Activated B cell treated with CpG ODN at 0.5 μM for 24 hours (primary cell): ENCODE measurements at regions of chr3 and their contacts with region 1.

Region 1: GRCh38 chr3:46208167-46208704 is at the start of gene CCR1:
- DNase-seq: no peak
- ATAC-seq: peak; percentile 80
- H3K4me3 Mint-ChIP-seq: peak within 1 kb of the TSS; percentile 73
- H3K27ac Mint-ChIP-seq: peak within 1 kb of the TSS; percentile 72
- H3K4me1 Mint-ChIP-seq: peaks cover 52% of the 10 kb centered on the region
- H3K27me3 Mint-ChIP-seq: no peaks in the 10 kb centered on the region
- CTCF ChIP-seq: no peak
- total RNA-seq, gene CCR1: 0.73 and 0.82 TPM in 2 replicates

Region 2: GRCh38 chr3:45938864-45939263 is 269.4 kb before region 1 on chr3:
- CTCF ChIA-PET with region 1: interaction called, 12 read pairs
- POLR2A ChIA-PET with region 1: no interaction called
- intact Hi-C with region 1: loop called (anchors 1 kb)
- DNase-seq: peak; percentile 55
- ATAC-seq: peak; percentile 86
- H3K4me3 Mint-ChIP-seq: no peak overlapping the region
- H3K27ac Mint-ChIP-seq: no peak overlapping the region
- H3K4me1 Mint-ChIP-seq: peaks cover 5% of the 10 kb centered on the region
- H3K27me3 Mint-ChIP-seq: no peaks in the 10 kb centered on the region
- CTCF ChIP-seq: peak; percentile 68

Region 3: DNA sequence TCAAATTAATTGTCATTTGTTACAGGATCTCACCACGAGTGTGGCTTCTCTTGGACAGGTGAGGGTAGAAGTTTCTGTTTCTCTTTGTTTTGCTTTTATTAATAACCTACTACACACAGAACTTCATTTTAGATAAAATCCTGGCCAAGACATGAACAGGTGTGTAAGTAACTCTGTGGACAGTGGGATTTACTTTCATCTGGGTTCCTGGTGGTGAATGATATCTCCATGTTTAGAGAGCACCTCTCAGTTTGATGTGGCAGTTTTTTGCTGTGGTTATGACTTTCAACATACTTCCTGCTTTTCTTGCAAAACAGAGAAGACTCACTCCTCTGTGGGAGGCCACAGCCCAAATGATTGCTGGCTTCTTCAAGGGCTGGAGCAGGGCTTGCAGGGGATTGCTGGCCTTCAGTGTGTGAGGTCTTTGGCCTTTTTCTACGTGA is 109.9 kb before region 1 on chr3:
- CTCF ChIA-PET with region 1: interaction called, 8 read pairs
- POLR2A ChIA-PET with region 1: no interaction called
- intact Hi-C with region 1: loop called (anchors 1 kb)
- DNase-seq: no peak
- ATAC-seq: peak; percentile 32
- H3K4me3 Mint-ChIP-seq: peak overlapping the region; percentile 63
- H3K27ac Mint-ChIP-seq: peak overlapping the region; percentile 90
- H3K4me1 Mint-ChIP-seq: peaks cover 75% of the 10 kb centered on the region
- H3K27me3 Mint-ChIP-seq: no peaks in the 10 kb centered on the region
- CTCF ChIP-seq: no peak

Region 4: GRCh38 chr3:46186471-46187340 is 21.5 kb before region 1 on chr3:
- CTCF ChIA-PET with region 1: interaction called, 11 read pairs
- POLR2A ChIA-PET with region 1: no interaction called
- intact Hi-C with region 1: loop called (anchors 1 kb)
- DNase-seq: no peak
- ATAC-seq: peak; percentile 90
- H3K4me3 Mint-ChIP-seq: peak overlapping the region; percentile 52
- H3K27ac Mint-ChIP-seq: peak overlapping the region; percentile 68
- H3K4me1 Mint-ChIP-seq: peaks cover 58% of the 10 kb centered on the region
- H3K27me3 Mint-ChIP-seq: no peaks in the 10 kb centered on the region
- CTCF ChIP-seq: no peak

Region 5: GRCh38 chr3:46378426-46378942 is 170.2 kb after region 1 on chr3:
- CTCF ChIA-PET with region 1: interaction called, 11 read pairs
- POLR2A ChIA-PET with region 1: no interaction called
- intact Hi-C with region 1: no loop called
- DNase-seq: peak; percentile 42
- ATAC-seq: peak; percentile 40
- H3K4me3 Mint-ChIP-seq: no peak overlapping the region
- H3K27ac Mint-ChIP-seq: no peak overlapping the region
- H3K4me1 Mint-ChIP-seq: peaks cover 43% of the 10 kb centered on the region
- H3K27me3 Mint-ChIP-seq: no peaks in the 10 kb centered on the region
- CTCF ChIP-seq: no peak